Activated CD4-positive, alpha-beta T cell treated with anti-CD3 and anti-CD28 coated beads for 36 hours (primary cell): ENCODE measurements at regions of chr16 and their contacts with region 1.

Region 1: DNA sequence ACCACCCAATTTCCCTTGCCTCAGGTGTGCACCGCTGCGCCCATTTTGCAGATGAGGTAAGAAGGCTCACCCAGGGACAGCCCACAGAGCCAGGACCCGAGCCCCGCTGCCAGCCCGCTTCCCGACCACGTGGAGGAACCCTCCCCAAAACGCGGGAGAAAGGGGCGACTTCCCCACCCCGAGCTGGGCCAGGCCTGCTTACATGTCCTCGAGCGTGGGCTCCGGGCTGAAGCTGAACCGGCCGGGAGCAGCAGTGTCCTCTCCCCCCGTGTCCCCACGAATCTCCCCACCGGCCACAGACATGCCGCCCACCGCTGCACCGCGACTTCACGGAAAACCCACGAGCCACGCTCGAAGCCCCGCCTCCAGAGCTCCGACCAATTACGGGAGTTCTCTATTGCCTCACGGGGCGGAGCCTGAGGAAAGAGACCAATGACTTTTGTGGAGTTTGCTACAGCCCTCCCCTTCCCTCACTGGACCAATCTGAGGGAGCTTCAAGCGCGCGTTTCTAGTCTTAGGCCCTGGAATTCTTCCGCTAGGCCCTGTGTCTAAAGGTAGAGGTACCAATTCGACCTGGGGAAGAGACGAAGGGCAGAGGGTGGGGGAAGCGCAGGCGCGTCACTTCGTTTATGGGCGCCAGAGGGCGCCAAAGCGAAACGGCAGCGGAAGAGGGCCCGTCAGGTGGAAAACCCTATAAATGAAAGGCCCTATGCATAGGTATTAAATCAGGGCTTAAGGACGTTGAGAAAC is at the start of gene DCTPP1:
- DNase-seq: peak; percentile 97
- ATAC-seq: peak; percentile 96
- H3K4me3 Mint-ChIP-seq: no peak within 1 kb of the TSS
- H3K27ac Mint-ChIP-seq: no peak within 1 kb of the TSS
- H3K4me1 Mint-ChIP-seq: peaks cover 31% of the 10 kb centered on the region
- H3K27me3 Mint-ChIP-seq: no peaks in the 10 kb centered on the region
- total RNA-seq, gene DCTPP1: 89.3 to 102 TPM

Region 2: DNA sequence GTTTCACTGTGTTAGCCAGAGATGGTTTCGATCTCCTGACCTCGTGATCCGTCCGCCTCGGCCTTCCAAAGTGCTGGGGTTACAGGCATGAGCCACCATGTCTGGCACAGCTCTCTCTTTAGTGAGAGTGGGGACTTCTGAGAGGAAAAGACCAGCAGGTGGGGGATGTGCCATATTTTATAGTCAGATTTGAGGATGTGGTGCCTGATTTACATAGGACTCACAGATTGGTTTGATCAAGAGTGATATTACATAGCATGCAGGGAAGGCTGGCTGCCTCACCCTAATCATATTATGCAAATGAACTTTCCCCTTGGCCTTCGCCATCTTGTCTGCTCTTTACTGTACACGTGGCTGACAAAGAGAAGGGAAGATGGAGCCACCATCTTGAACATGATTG is 278.8 kb before region 1 on chr16:
- CTCF ChIA-PET with region 1: no interaction called
- POLR2A ChIA-PET with region 1: no interaction called
- intact Hi-C with region 1: no loop called
- DNase-seq: no peak
- ATAC-seq: no peak
- H3K4me3 Mint-ChIP-seq: no peak overlapping the region
- H3K27ac Mint-ChIP-seq: no peak overlapping the region
- H3K4me1 Mint-ChIP-seq: no peaks in the 10 kb centered on the region
- H3K27me3 Mint-ChIP-seq: no peaks in the 10 kb centered on the region

Region 3: DNA sequence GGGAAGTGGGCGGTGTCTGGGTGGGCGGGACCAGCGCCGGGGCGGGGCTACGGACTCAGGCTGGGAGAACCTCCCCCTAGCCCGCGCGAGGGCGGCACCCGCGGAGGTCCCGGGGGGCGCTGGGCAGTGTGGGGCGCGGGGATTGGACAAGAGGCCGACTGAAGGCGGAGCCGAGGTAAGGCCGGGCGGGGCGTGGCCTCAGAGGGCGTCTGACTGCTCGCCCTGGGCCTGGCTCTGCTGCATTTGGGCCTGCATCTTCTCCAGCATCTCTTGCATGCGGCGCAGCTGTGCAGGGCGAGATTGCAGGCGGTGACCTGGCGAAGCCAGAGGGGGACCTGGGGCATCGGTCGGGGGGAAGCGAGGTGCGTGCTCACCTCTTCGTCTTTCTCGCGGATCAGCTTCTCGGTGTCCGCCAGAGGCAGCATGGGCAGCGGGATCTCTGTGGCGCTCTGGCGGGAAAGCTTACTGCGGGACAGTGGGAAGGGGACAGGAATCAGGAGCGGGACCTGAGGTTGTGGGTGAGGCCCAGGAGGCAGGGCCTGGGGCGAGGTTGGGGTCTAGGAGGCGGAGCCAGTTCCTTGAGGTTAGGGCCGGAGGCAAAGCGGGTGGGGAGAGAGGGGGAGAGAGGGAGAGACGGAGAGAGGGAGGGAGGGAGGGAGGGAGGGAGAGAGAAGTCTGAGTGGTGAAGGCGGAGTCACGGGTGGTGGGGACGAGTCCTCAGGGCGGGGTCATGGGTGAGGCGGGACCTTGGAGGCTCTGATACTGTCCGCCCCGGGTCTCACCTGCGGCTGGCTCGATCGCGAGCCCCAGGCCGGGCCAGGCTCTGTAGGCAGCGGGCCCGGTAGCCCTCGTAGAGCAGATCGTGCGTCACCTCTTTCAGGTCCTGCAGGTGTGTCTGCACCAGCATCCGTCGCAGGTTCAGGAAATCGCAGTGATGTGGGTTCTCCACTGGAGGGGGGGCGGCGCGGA is 51.3 kb before region 1 on chr16:
- CTCF ChIA-PET with region 1: interaction called, 8 read pairs
- POLR2A ChIA-PET with region 1: interaction called, 6 read pairs
- intact Hi-C with region 1: loop called in 1 of 2 experiments (anchors 1 kb)
- DNase-seq: peak; percentile 100
- ATAC-seq: peak; percentile 87
- H3K4me3 Mint-ChIP-seq: peak overlapping the region; percentile 99
- H3K27ac Mint-ChIP-seq: peak overlapping the region; percentile 99
- H3K4me1 Mint-ChIP-seq: peaks cover 44% of the 10 kb centered on the region
- H3K27me3 Mint-ChIP-seq: no peaks in the 10 kb centered on the region

Region 4: GRCh38 chr16:30458561-30459394 is 28.9 kb after region 1 on chr16:
- CTCF ChIA-PET with region 1: interaction called, 39 read pairs
- POLR2A ChIA-PET with region 1: interaction called, 11 read pairs
- intact Hi-C with region 1: loop called (anchors 1 to 2 kb)
- DNase-seq: peak; percentile 94
- ATAC-seq: peak; percentile 96
- H3K4me3 Mint-ChIP-seq: peak overlapping the region; percentile 57
- H3K27ac Mint-ChIP-seq: peak overlapping the region; percentile 95
- H3K4me1 Mint-ChIP-seq: peaks cover 59% of the 10 kb centered on the region
- H3K27me3 Mint-ChIP-seq: no peaks in the 10 kb centered on the region

Region 5: DNA sequence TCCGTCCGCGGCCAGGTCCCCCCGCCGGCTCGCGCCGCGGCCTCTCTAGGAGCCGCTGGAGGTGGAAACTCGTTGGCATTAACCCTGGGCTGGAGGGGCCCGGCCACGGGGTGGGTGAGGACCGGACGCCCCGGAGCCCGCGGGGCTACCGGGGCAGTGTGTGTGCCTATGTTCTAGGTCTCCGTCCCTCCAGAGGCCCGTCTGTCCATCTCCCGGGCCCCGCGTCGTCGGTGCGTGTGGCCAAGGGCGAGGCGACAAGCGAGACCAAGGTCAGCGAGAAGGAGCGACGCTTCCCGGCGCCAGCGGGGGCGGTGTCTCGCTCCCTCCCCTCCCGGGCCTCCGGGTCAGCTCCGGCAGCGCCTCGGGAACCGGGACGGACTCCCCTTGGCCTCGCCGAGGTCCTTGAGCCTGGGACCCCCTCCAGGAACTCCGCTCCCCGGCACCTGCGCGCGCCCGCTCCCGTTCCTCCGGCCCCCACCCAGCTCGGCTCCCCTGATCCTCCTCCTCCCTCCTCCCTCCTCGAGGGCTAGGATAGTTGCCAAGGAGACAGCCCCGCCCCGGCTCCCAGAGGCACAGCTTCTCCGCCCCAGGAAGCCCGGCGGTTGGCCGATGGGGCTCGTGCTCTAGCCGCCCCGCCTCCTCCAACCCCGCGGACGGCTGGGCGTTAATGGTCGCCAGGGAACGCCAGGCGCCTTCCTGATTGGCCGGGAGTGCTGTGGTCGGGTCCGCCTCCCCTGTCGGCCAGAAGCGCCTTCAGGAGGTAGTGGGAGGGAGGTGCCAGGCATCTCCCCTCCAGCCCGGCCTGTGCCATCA is 97.2 kb after region 1 on chr16:
- CTCF ChIA-PET with region 1: interaction called, 5 read pairs
- POLR2A ChIA-PET with region 1: no interaction called
- intact Hi-C with region 1: loop called (anchors 1 to 2 kb)
- DNase-seq: peak; percentile 98
- ATAC-seq: peak; percentile 93
- H3K4me3 Mint-ChIP-seq: peak overlapping the region; percentile 55
- H3K27ac Mint-ChIP-seq: peak overlapping the region; percentile 62
- H3K4me1 Mint-ChIP-seq: peaks cover 37% of the 10 kb centered on the region
- H3K27me3 Mint-ChIP-seq: no peaks in the 10 kb centered on the region

Region 6: DNA sequence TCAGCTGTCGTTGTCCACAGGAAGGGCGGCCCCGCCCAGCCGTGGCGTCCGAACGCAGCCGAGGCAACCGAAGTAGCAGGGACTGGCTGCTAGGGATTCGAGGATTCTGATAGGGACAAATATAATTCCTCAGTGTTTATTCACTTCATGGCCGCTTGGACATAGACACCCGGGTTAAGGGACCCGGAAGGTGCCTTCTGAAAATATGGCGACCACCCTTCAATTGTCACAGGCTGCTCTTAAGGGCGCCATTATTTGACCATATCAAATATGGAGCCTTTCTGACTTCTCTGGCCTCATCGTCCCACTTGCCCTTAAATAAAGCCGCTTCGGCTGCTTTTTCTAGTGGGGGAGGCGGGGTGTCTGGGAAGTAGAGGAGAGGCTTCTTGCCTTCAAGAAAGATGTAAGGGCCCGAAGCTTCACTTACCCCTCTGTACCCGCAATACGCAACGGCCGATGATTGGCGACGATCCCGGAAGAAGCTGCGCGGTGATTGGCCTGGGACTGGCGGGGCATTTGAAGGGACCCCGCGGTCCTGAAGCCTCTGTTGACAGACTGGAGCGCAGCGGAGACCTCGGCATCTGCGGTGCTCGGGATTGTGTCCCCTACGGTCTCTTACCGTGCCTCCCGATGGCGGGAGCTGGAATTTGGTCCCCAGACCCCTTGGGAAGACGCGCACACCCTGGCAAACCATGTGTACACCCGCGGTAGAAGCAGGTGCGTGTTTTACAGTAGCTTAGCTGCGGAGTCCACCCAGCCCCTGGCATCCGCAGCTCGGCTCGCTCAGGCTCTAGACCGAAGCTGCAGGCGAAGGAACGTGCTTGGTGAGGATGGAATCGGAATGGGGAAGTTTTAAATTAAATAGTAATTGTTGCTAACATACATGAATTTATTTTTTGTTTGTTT is 142.1 kb after region 1 on chr16 and contains the start of gene ZNF688:
- CTCF ChIA-PET with region 1: interaction called, 3 read pairs
- POLR2A ChIA-PET with region 1: interaction called, 5 read pairs
- intact Hi-C with region 1: loop called in 1 of 2 experiments (anchors 1 kb)
- DNase-seq: peak; percentile 95
- ATAC-seq: peak; percentile 79
- H3K4me3 Mint-ChIP-seq: peak within 1 kb of the TSS; percentile 87
- H3K27ac Mint-ChIP-seq: peak within 1 kb of the TSS; percentile 93
- H3K4me1 Mint-ChIP-seq: peaks cover 57% of the 10 kb centered on the region
- H3K27me3 Mint-ChIP-seq: no peaks in the 10 kb centered on the region
- total RNA-seq, gene ZNF688: 7.1 to 9.1 TPM

Region 7: DNA sequence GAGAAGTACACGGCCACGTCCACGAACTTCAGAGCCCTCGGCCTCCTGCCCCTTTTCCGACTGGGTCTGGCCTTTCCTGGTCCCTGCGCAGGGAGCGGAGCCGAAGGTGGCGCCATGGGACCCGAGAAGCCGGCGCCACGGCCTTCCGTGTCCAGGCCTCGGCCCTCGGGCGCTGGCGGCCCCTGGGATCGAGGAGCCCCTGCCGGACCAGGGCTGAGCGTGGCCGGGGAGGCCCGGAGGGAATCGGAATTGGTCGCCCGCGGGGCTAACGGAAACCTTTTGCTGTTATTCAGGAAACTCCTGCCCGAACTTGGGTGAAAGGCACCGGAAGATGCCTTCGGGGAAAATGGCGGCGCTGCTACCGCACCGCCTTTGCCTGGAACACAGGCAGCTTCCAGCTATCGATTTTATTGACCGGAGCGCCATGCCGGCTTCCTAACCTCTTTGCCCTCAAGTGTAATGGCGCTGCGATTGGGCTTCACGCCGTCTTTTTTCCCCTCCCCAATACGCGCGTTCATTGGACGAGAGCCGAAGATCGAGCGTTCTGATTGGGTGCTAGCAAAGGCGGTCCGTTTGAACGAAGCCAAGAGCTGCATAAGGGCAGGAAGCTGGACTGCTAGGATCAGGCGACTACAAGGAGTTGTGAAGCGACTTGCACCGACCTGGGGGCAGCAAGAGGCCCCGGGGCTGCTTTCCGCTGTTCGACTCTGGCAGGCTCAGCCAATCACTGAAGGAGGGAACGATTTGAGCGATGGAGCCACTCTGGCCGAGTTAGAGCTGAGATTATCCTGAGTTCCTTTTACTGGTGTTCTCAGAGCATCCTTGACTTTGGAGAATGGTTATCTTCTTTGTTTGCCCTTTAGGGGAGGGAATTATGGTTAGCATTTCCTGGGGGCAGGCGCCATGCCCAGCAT is 180.3 kb after region 1 on chr16 and contains the start of gene ZNF689:
- CTCF ChIA-PET with region 1: interaction called, 27 read pairs
- POLR2A ChIA-PET with region 1: interaction called, 4 read pairs
- intact Hi-C with region 1: loop called (anchors 1 to 5 kb)
- DNase-seq: peak; percentile 96
- ATAC-seq: peak; percentile 88
- H3K4me3 Mint-ChIP-seq: peak within 1 kb of the TSS; percentile 80
- H3K27ac Mint-ChIP-seq: peak within 1 kb of the TSS; percentile 96
- H3K4me1 Mint-ChIP-seq: peaks cover 19% of the 10 kb centered on the region
- H3K27me3 Mint-ChIP-seq: no peaks in the 10 kb centered on the region
- total RNA-seq, gene ZNF689: 9.0 to 10.7 TPM

Region 8: GRCh38 chr16:30650369-30651123 is 220.7 kb after region 1 on chr16 and contains the start of gene PRR14:
- CTCF ChIA-PET with region 1: interaction called, 3 read pairs
- POLR2A ChIA-PET with region 1: interaction called, 6 read pairs
- intact Hi-C with region 1: loop called in 1 of 2 experiments (anchors 1 kb)
- DNase-seq: peak; percentile 100
- ATAC-seq: peak; percentile 82
- H3K4me3 Mint-ChIP-seq: peak within 1 kb of the TSS; percentile 95
- H3K27ac Mint-ChIP-seq: peak within 1 kb of the TSS; percentile 97
- H3K4me1 Mint-ChIP-seq: peaks cover 21% of the 10 kb centered on the region
- H3K27me3 Mint-ChIP-seq: no peaks in the 10 kb centered on the region
- total RNA-seq, gene PRR14: 76.8 to 77.8 TPM